MCF 10A (cell line): ENCODE measurements at regions of chr1 and their contacts with region 1.

Region 1: GRCh38 chr1:93846211-93846991 is 32.6 kb downstream of the DNTTIP2 start:
- DNase-seq: peak; percentile 83
- H3K4me3 Mint-ChIP-seq: peak overlapping the region; percentile 96
- H3K27ac Mint-ChIP-seq: peak overlapping the region; percentile 92
- H3K4me1 Mint-ChIP-seq: peaks cover 7% of the 10 kb centered on the region
- H3K27me3 Mint-ChIP-seq: no peaks in the 10 kb centered on the region
- CTCF ChIP-seq: no peak

Region 2: GRCh38 chr1:93328809-93329760 is 517.3 kb before region 1 on chr1:
- CTCF ChIA-PET with region 1: no interaction called
- POLR2A ChIA-PET with region 1: interaction called, 10 read pairs
- intact Hi-C with region 1: no loop called
- DNase-seq: no peak
- H3K4me3 Mint-ChIP-seq: no peak overlapping the region
- H3K27ac Mint-ChIP-seq: no peak overlapping the region
- H3K4me1 Mint-ChIP-seq: peaks cover 15% of the 10 kb centered on the region
- H3K27me3 Mint-ChIP-seq: no peaks in the 10 kb centered on the region
- CTCF ChIP-seq: no peak

Region 3: GRCh38 chr1:93437976-93438605 is 408.3 kb before region 1 on chr1:
- CTCF ChIA-PET with region 1: interaction called, 7 read pairs
- POLR2A ChIA-PET with region 1: interaction called, 18 read pairs
- intact Hi-C with region 1: loop called (anchors 1 kb)
- DNase-seq: peak; percentile 55
- H3K4me3 Mint-ChIP-seq: no peak overlapping the region
- H3K27ac Mint-ChIP-seq: no peak overlapping the region
- H3K4me1 Mint-ChIP-seq: peaks cover 6% of the 10 kb centered on the region
- H3K27me3 Mint-ChIP-seq: no peaks in the 10 kb centered on the region
- CTCF ChIP-seq: peak; percentile 45

Region 4: DNA sequence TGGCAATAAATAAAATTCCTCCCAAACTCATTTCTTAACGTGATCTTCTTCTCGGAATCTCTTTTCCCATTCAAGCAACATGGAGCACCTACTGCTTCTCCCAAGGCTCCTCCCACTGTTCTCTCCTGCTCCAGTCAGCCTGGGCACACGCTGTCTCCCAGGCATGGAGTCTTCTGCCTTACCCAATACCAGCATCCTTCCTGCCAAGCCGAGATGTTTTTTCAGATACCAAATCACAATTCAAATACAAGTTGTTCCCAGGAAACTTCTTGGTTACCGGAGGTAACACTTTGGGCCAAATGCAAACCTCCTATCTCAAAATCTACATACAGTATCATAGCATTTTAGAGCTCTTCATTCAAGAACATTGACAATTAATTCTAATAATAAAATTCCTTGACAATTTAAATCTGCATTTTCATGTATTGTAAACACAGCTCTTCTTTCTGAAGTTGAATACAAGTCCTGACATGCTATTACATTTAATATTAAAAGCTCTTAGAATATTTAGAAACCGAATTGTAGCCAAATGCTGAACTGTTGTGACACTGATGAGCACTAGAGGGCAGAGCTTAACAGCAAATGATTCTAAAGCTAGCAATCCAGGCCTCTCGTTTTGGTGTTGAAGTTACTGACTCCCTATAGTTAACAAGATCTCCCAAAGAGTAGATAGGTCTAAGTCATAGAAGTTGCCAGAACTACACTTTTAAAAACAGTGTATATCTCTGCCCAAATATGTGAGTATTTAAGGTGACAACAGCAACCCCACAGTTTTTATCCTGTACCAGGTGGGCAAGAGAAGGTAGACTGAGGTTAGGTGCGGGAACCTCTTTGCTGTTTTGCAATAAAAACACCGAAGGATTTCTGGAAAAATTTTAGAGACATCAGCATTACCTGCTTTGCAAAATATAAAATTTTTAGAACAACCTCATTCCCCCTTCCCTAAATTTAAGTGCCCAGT is 217.0 kb before region 1 on chr1:
- CTCF ChIA-PET with region 1: interaction called, 58 read pairs
- POLR2A ChIA-PET with region 1: interaction called, 44 read pairs
- intact Hi-C with region 1: loop called (anchors 1 kb)
- DNase-seq: peak; percentile 76
- H3K4me3 Mint-ChIP-seq: peak overlapping the region; percentile 52
- H3K27ac Mint-ChIP-seq: peak overlapping the region; percentile 95
- H3K4me1 Mint-ChIP-seq: peaks cover 46% of the 10 kb centered on the region
- H3K27me3 Mint-ChIP-seq: no peaks in the 10 kb centered on the region
- CTCF ChIP-seq: peak; percentile 63

Region 5: GRCh38 chr1:93680757-93681550 is 165.4 kb before region 1 on chr1:
- CTCF ChIA-PET with region 1: interaction called, 13 read pairs
- POLR2A ChIA-PET with region 1: interaction called, 7 read pairs
- intact Hi-C with region 1: no loop called
- DNase-seq: peak; percentile 91
- H3K4me3 Mint-ChIP-seq: peak overlapping the region; percentile 86
- H3K27ac Mint-ChIP-seq: peak overlapping the region; percentile 94
- H3K4me1 Mint-ChIP-seq: peaks cover 39% of the 10 kb centered on the region
- H3K27me3 Mint-ChIP-seq: no peaks in the 10 kb centered on the region
- CTCF ChIP-seq: peak; percentile 48

Region 6: DNA sequence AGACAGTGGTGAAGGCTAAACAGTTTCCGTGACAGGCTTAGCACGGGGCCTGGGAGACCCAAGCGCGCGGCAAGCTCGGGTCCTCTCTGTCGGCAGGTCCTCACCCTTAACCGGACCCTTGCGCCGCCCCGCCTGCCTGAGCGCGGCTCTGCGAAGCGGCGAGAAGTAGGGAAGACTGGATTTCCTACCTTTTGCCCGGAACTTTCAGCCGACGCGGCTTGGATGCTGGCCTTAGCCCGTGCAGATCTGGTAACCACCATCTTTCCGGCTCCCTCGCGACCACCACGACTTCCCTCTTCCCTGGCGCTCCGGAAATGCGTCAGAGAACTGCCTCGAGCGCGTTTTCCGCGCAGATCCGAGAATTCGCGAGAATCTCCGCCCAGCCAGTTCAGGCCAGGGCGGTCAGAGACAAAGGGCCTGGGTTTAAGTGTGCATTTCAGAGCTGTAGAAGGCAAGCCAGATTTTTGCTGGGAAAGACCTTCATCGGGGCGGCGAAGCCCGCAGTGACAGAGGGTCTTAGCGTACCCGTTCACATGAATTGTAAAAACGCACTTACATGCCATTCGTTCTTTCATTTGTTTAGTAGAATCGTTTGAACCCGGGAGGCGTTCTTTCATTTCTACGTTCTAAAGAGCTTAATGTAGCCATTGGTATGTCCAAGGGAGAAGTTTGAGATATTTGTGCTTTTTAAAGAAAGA is 32.6 kb after region 1 on chr1 and contains the start of gene DNTTIP2:
- CTCF ChIA-PET with region 1: interaction called, 3 read pairs
- POLR2A ChIA-PET with region 1: interaction called, 19 read pairs
- intact Hi-C with region 1: no loop called
- DNase-seq: peak; percentile 91
- H3K4me3 Mint-ChIP-seq: peak within 1 kb of the TSS; percentile 96
- H3K27ac Mint-ChIP-seq: peak within 1 kb of the TSS; percentile 99
- H3K4me1 Mint-ChIP-seq: peaks cover 27% of the 10 kb centered on the region
- H3K27me3 Mint-ChIP-seq: no peaks in the 10 kb centered on the region
- CTCF ChIP-seq: no peak
- total RNA-seq, gene DNTTIP2: 78.1 and 96.5 TPM in 2 replicates

Region 7: GRCh38 chr1:94228640-94229375 is 382.4 kb after region 1 on chr1:
- CTCF ChIA-PET with region 1: no interaction called
- POLR2A ChIA-PET with region 1: no interaction called
- intact Hi-C with region 1: no loop called
- DNase-seq: no peak
- H3K4me3 Mint-ChIP-seq: peak overlapping the region; percentile 47
- H3K27ac Mint-ChIP-seq: peak overlapping the region; percentile 49
- H3K4me1 Mint-ChIP-seq: peaks cover 48% of the 10 kb centered on the region
- H3K27me3 Mint-ChIP-seq: no peaks in the 10 kb centered on the region
- CTCF ChIP-seq: no peak